H1 (cell line): ENCODE measurements at regions of chr3 and their contacts with region 1.

Region 1: GRCh38 chr3:185677146-185677829 is 91.2 kb downstream of the SENP2 start:
- DNase-seq: no peak
- H3K4me3 ChIP-seq: no peak overlapping the region
- H3K27ac ChIP-seq: no peak overlapping the region
- H3K4me1 ChIP-seq: no peaks in the 10 kb centered on the region
- H3K27me3 ChIP-seq: no peaks in the 10 kb centered on the region
- CTCF ChIP-seq: peak in 2 of 3 experiments; percentile 71 to 83; a peak in 3 of 4 replicates
- EP300 ChIP-seq: no peak
- POLR2A ChIP-seq: no peak
- RAD21 ChIP-seq: peak; percentile 79 to 85

Region 2: DNA sequence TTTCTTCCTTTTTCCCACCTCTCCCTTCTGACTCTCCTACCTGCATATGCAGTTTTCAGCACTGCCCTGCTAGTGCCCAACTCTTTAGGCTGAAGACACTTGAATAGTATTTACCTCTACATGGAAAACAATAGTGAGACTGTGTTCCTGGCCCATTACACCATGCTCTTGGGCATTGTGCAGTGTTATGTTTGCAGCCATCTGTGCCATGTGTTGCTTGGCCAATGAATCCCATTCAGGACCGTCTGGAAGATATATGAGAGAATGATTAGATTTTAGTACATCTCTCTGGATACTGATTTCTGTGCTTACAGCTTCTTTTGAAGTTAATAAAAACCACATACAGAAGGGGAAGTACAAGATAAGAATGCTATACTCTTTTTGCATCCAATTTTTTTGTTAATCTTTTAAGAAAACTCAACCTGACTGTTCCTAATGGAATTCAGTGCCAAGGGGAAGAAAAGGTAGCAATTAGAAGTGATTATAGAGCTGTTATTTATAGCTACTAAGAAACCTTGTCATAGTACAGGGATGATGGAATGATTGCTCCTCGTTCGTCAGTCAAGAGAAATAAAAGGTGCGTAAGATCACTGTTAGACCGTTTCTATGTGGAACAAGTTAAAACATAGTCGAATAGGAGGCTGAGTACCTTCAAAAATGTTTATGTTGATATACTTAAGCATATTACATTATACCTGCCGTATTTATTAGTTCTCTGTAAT is 237.4 kb before region 1 on chr3:
- CTCF ChIA-PET with region 1: no interaction called
- POLR2A ChIA-PET with region 1: no interaction called
- DNase-seq: no peak
- H3K4me3 ChIP-seq: no peak overlapping the region
- H3K27ac ChIP-seq: no peak overlapping the region
- H3K4me1 ChIP-seq: no peaks in the 10 kb centered on the region
- H3K27me3 ChIP-seq: peaks cover 0 to 1% (median 0%) of the 10 kb centered on the region in 4 experiments; a peak in 1 of 7 replicates
- CTCF ChIP-seq: no peak
- EP300 ChIP-seq: no peak
- POLR2A ChIP-seq: no peak
- RAD21 ChIP-seq: no peak

Region 3: DNA sequence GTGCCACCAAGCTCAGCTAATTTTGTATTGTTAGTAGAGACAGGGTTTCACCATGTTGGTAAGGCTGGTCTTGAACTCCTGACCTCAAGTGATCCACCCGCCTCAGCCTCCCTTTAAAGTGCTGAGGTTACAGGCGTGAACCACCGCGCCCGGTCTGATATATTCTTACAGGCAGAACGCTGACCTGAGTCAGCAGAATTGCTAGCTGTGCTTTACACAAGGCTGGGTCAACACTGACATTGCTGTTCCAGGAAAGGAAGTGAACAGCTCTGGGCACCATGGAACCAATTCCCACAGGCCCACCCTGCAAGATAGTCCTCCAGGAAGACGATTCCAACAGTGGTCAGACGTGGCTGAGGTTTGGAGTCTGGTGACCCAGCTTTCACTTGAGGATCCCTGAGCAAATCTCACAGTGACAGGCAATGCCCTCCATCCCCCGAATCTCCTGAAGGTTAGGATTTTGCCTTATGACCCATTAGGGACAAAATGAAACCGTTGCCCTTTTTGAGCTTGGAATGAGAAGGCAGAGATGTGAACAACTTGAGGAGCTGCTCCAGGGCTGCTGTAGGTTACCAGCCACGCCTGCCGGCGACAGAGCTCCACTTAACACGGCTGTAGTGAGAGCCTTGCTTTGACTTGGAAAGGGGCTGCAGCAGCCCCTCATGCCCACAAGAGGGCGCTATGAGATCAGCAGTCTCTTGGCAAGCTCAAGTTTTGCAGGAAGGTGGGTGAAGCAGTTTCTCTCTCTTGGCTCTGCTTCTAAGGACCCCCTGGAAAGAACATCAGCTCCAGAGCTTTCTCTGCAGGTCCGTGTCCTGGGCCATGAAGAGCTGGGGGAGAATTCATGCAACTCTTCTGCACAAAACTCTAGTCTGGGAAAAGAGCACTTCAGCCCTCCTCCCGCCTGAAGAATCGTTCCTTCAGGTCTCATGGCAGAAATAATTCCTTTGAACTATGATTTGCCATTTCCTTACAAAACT is 17.1 kb before region 1 on chr3:
- CTCF ChIA-PET with region 1: interaction called, 55 read pairs
- POLR2A ChIA-PET with region 1: interaction called, 4 read pairs
- DNase-seq: peak; percentile 61 to 86
- H3K4me3 ChIP-seq: no peak overlapping the region
- H3K27ac ChIP-seq: no peak overlapping the region
- H3K4me1 ChIP-seq: peaks cover 0 to 3% (median under 1%) of the 10 kb centered on the region in 4 experiments; a peak in 3 of 7 replicates
- H3K27me3 ChIP-seq: no peaks in the 10 kb centered on the region
- CTCF ChIP-seq: peak; percentile 92 to 100 (median 93)
- EP300 ChIP-seq: no peak
- POLR2A ChIP-seq: no peak; a peak in 1 of 3 replicates
- RAD21 ChIP-seq: peak; percentile 96 to 97

Region 4: DNA sequence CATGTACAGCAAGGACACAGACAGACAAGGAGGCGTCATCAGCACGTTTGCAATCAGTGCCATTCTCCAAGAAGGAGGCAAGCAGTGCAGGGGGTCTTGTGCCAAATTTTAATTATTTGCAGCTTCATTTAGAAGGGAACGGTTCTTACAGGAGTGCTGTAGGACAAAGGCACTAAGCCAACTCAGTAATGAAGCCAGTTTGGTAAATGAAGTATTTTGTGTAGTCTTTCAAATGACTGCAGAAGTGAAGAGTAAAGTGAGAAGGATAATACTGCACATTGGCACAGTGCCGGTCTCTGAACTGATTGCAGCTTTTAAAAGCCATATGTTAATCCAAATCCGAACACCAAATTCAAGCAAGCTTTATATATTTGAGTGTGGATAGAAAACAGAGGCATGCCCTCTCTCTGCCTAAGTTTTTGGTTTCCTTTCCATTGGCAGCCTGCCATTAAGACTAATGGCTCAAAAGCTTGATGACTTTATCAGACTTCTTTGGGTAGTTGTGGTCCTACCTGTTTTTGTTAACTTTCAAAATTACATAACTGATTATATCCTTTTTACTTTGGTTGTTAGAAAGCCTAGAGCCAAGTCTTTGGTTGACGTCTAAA is 10.1 kb after region 1 on chr3:
- CTCF ChIA-PET with region 1: interaction called, 16 read pairs
- POLR2A ChIA-PET with region 1: interaction called, 3 read pairs
- DNase-seq: no peak
- H3K4me3 ChIP-seq: no peak overlapping the region
- H3K27ac ChIP-seq: no peak overlapping the region
- H3K4me1 ChIP-seq: no peaks in the 10 kb centered on the region; a peak in 1 of 7 replicates
- H3K27me3 ChIP-seq: no peaks in the 10 kb centered on the region
- CTCF ChIP-seq: no peak
- EP300 ChIP-seq: no peak
- POLR2A ChIP-seq: no peak
- RAD21 ChIP-seq: no peak

Region 5: GRCh38 chr3:185702262-185703225 is 25.3 kb after region 1 on chr3:
- CTCF ChIA-PET with region 1: interaction called, 11 read pairs
- POLR2A ChIA-PET with region 1: no interaction called
- DNase-seq: no peak
- H3K4me3 ChIP-seq: no peak overlapping the region
- H3K27ac ChIP-seq: no peak overlapping the region
- H3K4me1 ChIP-seq: peaks cover 3 to 19% (median 12%) of the 10 kb centered on the region in 4 experiments
- H3K27me3 ChIP-seq: no peaks in the 10 kb centered on the region
- CTCF ChIP-seq: no peak
- EP300 ChIP-seq: no peak
- POLR2A ChIP-seq: no peak
- RAD21 ChIP-seq: no peak

Region 6: DNA sequence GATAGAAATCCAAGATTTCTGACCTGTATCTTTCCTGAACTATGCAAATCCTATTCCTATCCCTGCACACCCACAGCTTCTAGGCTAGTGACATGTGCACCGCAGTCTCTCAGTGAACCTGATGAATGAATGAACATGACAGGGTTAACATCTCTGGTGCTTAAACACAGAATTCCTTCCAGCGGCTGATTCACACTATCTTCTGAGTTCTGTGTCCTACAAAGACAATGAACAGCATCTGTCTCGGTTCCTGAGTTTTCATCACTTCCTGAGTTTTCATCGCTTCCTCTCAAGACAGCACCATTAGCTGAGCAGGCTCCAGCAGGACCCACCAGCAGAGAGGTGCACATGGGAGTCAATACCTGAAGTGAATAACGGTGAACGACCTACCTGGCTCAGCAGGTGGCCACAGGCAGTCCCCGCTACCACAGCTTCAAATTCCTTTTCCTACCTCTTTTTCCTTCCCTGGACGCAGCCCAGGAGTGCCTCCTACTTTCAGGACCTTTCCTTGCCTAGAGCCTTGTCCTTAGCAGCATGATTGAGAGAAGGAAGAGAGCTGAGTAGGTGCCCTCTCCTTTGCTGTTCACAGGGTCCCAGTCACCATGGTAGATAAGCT is 34.1 kb after region 1 on chr3:
- CTCF ChIA-PET with region 1: interaction called, 18 read pairs
- POLR2A ChIA-PET with region 1: no interaction called
- DNase-seq: peak in 1 of 2 experiments; percentile 50
- H3K4me3 ChIP-seq: no peak overlapping the region
- H3K27ac ChIP-seq: no peak overlapping the region
- H3K4me1 ChIP-seq: peaks cover 8 to 29% (median 22%) of the 10 kb centered on the region in 4 experiments
- H3K27me3 ChIP-seq: no peaks in the 10 kb centered on the region
- CTCF ChIP-seq: no peak
- EP300 ChIP-seq: no peak
- POLR2A ChIP-seq: no peak
- RAD21 ChIP-seq: no peak; a peak in 1 of 4 replicates

Region 7: GRCh38 chr3:185717121-185717520 is 39.8 kb after region 1 on chr3:
- CTCF ChIA-PET with region 1: interaction called, 18 read pairs
- POLR2A ChIA-PET with region 1: no interaction called
- DNase-seq: no peak
- H3K4me3 ChIP-seq: no peak overlapping the region
- H3K27ac ChIP-seq: no peak overlapping the region
- H3K4me1 ChIP-seq: peaks cover 12 to 33% (median 19%) of the 10 kb centered on the region in 4 experiments
- H3K27me3 ChIP-seq: no peaks in the 10 kb centered on the region
- CTCF ChIP-seq: no peak
- EP300 ChIP-seq: no peak
- POLR2A ChIP-seq: no peak
- RAD21 ChIP-seq: no peak

Region 8: DNA sequence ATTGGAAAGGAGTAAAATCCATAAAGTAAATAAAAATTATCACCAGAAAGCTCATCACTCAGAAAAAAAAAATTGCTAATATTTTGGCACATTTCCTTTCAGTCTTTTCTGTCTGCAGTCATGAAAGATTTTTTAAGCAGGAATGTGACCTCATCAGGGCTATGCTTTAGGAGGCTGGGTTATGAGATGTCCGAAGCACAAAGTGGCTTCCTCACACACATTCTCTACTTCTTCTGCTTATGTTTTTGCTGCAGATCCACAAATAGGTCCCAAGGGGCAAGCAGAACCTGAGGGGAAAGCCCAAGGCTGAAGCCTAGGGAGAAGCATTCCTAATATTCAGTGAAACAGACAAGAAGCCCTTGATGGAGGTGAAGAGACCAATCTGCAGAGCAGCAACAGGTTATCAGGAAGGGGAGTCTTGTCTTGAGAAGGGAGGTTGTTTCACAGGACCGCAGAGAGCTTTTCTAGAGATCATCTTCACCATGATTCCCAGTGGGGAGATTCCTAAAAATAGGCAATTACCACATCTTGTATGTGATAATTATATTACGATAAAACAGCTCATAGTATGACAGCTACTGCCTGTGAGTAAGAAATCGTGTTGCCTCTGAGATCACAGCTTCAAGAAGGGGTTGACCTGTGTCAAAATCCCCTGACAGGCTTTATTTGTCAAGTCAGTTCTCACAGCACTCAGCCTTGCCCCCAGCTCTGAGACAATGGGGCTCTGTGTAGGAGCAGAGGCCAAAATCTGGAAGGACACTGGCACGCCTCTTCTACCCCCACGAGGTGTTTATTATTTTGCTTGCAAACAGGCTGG is 87.1 kb after region 1 on chr3:
- CTCF ChIA-PET with region 1: interaction called, 18 read pairs
- POLR2A ChIA-PET with region 1: interaction called, 3 read pairs
- DNase-seq: no peak
- H3K4me3 ChIP-seq: no peak overlapping the region
- H3K27ac ChIP-seq: no peak overlapping the region
- H3K4me1 ChIP-seq: peaks cover 0 to 18% (median 8%) of the 10 kb centered on the region in 4 experiments; a peak in 6 of 7 replicates
- H3K27me3 ChIP-seq: no peaks in the 10 kb centered on the region
- CTCF ChIP-seq: no peak
- EP300 ChIP-seq: no peak
- POLR2A ChIP-seq: no peak
- RAD21 ChIP-seq: no peak